ENCODE measurements at regions of chr7 and their contacts with region 1.

Region 1: GRCh38 chr7:101138213-101138870 is 11.4 kb downstream of the SERPINE1 start:
- DNase-seq: peak; percentile 96
- H3K4me3 Mint-ChIP-seq: no peak overlapping the region
- H3K27ac Mint-ChIP-seq: peak overlapping the region; percentile 41
- H3K4me1 Mint-ChIP-seq: peaks cover 60% of the 10 kb centered on the region
- H3K27me3 Mint-ChIP-seq: peaks cover 10% of the 10 kb centered on the region

Region 2: DNA sequence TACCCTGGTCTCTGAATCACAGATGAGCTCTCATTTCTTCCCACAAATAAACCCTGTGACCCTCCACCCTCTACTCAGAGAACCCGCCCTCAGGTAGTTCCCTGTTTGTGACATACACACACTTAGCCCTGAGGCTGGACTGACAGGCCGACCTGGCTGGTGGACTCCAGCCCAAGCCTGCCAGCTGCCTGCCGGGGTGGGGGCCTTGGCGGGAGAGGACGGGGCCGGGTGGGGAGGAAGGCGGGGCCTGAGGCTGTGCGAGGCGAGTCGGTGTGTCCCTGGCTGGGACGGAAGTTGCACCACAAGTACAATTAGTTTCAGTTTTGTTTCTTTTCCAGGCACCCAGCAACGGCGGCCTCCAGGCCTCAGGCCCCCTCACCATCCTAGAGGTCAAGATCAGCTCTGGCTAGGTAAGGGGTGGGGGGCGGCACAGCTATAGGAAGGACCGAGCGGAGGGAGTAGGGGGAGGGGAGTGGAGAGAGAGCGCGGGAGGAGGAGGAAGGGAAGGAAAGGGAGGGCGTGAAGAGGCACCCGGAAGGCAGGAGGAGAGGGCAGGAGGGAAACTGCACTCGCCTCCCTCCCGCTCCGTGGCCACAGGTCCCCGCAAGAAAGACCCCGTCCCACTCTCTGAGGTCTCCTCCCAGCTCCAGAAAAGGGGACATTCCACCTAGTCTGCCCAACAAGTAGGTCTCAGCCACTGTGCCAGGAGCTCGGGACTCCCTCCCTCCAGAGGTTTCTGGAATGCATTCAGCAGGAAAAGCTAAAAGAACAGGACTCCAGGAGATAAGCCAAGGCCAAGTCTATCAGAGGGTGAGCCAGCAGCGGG is 53.0 kb before region 1 on chr7 and contains the start of gene TRIM56:
- CTCF ChIA-PET with region 1: interaction called, 8 read pairs
- intact Hi-C with region 1: loop called (anchors 1 kb)
- DNase-seq: peak; percentile 85
- H3K4me3 Mint-ChIP-seq: peak within 1 kb of the TSS; percentile 99
- H3K27ac Mint-ChIP-seq: peak within 1 kb of the TSS; percentile 99
- H3K4me1 Mint-ChIP-seq: peaks cover 33% of the 10 kb centered on the region
- H3K27me3 Mint-ChIP-seq: no peaks in the 10 kb centered on the region
- total RNA-seq, gene TRIM56: 41.4 to 41.7 TPM

Region 3: DNA sequence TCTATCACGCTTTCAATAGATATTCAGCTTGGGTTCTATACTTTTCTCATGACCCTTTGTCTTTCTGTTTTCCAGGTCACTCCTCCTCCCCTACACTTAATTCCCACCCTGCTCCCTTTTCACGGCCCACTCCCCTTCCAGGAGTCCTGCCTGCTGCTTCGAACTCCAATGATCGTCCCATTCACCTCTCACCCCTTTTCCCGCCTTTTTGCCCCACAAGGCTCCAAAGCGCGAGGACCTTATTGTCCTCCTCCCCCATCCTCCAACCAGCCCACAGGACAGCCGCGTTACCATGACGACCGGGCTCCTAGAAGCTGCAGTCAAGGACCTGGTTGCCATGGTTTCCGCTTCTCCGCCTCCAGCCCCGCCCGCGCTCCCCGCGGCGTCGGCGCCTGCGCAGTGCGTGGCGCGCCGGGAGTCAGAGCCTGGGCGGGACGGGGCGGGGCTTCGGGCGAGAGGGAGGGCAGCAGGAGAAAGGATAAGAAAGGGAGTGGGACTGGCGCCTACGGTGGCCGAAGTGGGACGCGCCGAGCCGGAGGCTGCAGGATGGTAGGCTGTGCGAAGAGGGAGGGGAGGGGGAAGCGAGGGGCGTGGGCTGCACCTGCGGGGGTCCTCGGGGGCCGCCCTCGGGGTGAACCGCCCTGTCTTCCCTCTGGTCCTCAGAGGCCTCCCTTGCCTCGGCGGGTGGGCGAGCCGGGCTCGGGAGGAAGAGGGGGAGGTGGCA is 15.8 kb after region 1 on chr7 and contains the start of gene AP1S1:
- CTCF ChIA-PET with region 1: interaction called, 22 read pairs
- intact Hi-C with region 1: loop called (anchors 1 kb)
- DNase-seq: peak; percentile 96
- H3K4me3 Mint-ChIP-seq: peak within 1 kb of the TSS; percentile 79
- H3K27ac Mint-ChIP-seq: no peak within 1 kb of the TSS
- H3K4me1 Mint-ChIP-seq: peaks cover 9% of the 10 kb centered on the region
- H3K27me3 Mint-ChIP-seq: no peaks in the 10 kb centered on the region
- total RNA-seq, gene AP1S1: 40.6 to 43.5 TPM

Region 4: DNA sequence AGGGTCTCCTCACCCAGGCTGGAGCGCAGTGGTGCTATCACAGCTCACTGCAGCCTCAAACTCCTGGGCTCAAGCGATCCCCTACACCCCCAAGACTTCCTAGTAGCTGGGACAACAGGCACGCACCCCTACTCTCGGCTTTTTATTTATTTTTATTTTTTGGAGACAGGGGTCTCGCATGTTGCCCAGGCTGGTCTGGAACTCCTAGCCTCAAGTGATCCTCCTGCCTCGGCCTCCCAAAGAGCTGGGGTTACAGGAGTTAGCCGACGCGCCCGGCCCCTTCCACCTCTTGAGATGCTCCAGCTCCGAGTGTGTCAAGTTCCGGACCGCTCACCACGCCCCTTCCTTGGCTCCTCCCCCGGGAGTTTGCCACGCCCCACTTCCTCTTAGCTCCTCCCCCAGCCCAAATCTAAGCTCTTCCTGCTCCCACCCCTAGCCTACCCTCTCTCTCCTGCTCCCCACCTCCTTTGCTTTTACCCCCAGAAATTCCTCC is 35.5 kb after region 1 on chr7:
- CTCF ChIA-PET with region 1: interaction called, 17 read pairs
- intact Hi-C with region 1: loop called (anchors 2 kb)
- DNase-seq: peak; percentile 84
- H3K4me3 Mint-ChIP-seq: peak overlapping the region; percentile 52
- H3K27ac Mint-ChIP-seq: no peak overlapping the region
- H3K4me1 Mint-ChIP-seq: peaks cover 49% of the 10 kb centered on the region
- H3K27me3 Mint-ChIP-seq: peaks cover 80% of the 10 kb centered on the region

Region 5: GRCh38 chr7:101244375-101245146 is 106.2 kb after region 1 on chr7 and contains the start of gene FIS1:
- CTCF ChIA-PET with region 1: interaction called, 32 read pairs
- intact Hi-C with region 1: no loop called
- DNase-seq: peak; percentile 94
- H3K4me3 Mint-ChIP-seq: peak within 1 kb of the TSS; percentile 99
- H3K27ac Mint-ChIP-seq: peak within 1 kb of the TSS; percentile 96
- H3K4me1 Mint-ChIP-seq: peaks cover 37% of the 10 kb centered on the region
- H3K27me3 Mint-ChIP-seq: no peaks in the 10 kb centered on the region
- total RNA-seq, gene FIS1: 84.2 to 84.3 TPM

Measured in activated naive CD4-positive, alpha-beta T cell treated with anti-CD3 and anti-CD28 coated beads for 36 hours (primary cell).